Activated CD4-positive, alpha-beta memory T cell treated with anti-CD3 and anti-CD28 coated beads for 36 hours (primary cell): ENCODE measurements at regions of chr1 and their contacts with region 1.

Region 1: DNA sequence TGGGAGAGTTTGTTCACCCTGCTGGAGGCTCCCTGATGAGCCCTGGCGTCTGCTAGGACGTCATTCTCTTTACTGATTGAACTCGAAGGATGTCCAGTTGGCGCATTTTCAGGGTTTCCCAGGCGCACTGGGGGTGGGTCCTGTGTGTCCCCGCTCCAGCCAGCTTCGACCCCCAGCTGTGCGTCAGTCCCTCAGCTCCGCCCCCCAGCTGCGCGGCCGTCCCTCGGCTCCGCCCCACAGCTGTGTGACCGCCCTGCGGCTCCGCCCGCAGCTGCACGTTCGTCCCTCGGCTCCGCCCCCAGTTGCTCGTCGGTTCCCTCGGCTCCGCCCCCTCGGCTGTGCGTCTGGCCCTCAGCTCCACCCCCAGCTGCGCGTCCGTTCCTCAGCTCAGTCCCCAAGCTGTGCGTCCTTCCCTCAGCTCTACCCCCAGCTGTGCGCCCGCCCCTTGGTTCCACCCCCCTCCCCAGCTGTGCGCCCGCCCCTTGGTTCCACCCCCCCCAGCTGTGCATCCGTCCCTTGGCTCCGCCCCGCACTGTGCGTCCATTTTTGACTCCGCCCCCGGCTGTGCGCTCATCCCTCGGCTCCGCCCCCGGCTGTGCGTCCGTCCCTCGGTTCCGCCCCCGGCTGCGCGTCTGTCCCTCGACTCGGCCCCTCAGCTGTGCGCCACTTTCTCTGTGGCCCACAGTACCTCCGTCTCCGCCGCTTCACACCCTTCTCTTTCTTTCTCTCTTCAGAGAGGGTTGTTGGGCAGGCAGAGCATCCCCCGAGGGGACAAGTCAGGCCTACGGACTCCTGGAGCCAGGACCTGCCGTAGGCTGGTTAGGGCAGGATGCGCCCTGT is 61.3 kb downstream of the FAAP20 start:
- DNase-seq: peak; percentile 98
- H3K4me3 Mint-ChIP-seq: peak overlapping the region; percentile 77
- H3K27ac Mint-ChIP-seq: peak overlapping the region; percentile 49
- H3K4me1 Mint-ChIP-seq: peaks cover 19% of the 10 kb centered on the region
- H3K27me3 Mint-ChIP-seq: no peaks in the 10 kb centered on the region

Region 2: DNA sequence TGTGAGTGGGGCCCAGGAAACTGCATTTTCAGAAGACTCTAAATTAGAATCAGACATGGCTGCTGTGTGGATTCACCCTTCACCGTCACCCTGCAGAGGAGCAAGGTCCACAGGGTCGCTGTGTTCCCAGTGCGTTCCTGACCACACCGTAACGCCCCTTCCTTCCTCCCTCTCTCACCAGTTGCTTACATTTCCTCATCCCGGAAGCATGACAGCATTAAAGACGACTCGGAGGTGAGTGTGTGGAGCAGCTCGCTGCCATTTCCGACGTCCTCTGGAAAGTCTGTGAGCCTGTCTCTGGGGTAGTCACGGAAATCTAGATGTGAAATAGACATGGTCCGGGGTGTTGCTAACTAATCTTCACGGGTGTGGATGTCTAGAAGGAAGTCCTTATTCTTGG is 15.4 kb after region 1 on chr1:
- CTCF ChIA-PET with region 1: interaction called, 21 read pairs
- POLR2A ChIA-PET with region 1: no interaction called
- intact Hi-C with region 1: loop called (anchors 1 kb)
- DNase-seq: peak; percentile 78
- H3K4me3 Mint-ChIP-seq: no peak overlapping the region
- H3K27ac Mint-ChIP-seq: no peak overlapping the region
- H3K4me1 Mint-ChIP-seq: peaks cover 8% of the 10 kb centered on the region
- H3K27me3 Mint-ChIP-seq: no peaks in the 10 kb centered on the region

Region 3: GRCh38 chr1:2189459-2190425 is 56.5 kb after region 1 on chr1:
- CTCF ChIA-PET with region 1: interaction called, 5 read pairs
- POLR2A ChIA-PET with region 1: no interaction called
- intact Hi-C with region 1: loop called (anchors 2 kb)
- DNase-seq: peak; percentile 95
- H3K4me3 Mint-ChIP-seq: peak overlapping the region; percentile 80
- H3K27ac Mint-ChIP-seq: peak overlapping the region; percentile 85
- H3K4me1 Mint-ChIP-seq: peaks cover 23% of the 10 kb centered on the region
- H3K27me3 Mint-ChIP-seq: no peaks in the 10 kb centered on the region

Region 4: DNA sequence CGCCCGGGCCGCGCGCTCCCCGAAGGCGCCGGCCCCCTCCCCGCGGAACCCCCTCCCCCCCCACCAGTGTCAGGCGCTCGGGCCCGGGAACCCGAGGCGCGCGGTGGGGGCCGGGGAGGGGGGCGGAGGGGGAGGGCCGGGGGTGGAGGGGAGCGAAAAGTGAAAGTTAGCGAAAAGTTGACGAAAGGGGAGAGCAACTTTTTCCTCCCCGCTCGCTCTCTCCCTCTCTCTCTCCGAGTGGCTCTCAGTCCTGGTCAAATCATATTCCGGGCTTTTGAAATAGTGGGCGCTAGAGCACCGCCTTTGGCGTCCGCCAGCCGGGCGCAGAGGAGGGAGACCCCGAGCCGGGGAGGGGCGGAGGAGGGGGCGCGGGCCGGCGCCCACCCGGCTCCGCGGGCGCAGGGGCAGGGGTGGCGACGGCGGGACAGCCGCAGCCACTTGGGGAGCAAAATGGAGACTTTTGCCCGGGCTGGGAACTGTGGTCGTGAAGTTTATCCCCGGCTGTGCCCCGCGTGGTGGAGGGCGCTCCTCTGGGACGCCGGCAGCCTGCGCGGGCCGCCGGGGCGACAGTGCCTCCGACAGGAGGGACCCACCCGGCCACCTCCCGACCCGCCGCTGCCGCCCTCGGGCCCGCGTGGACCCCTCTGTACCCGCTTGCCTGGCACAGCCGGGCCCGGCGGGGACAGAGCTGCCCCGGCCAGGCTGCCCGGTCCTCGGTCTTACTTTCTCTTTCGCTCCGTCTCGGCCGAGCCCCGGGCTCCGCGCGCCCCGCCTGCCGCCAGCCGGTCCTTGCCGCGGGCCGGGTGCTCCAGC is 936.4 kb after region 1 on chr1:
- CTCF ChIA-PET with region 1: no interaction called
- POLR2A ChIA-PET with region 1: no interaction called
- intact Hi-C with region 1: no loop called
- DNase-seq: no peak
- H3K4me3 Mint-ChIP-seq: peak overlapping the region; percentile 35
- H3K27ac Mint-ChIP-seq: no peak overlapping the region
- H3K4me1 Mint-ChIP-seq: peaks cover 3% of the 10 kb centered on the region
- H3K27me3 Mint-ChIP-seq: peaks cover 23% of the 10 kb centered on the region